ENCODE measurements at regions of chr10 and their contacts with region 1.

Region 1: GRCh38 chr10:44386546-44387052 is 1.7 kb upstream of the CXCL12 start:
- DNase-seq: peak; percentile 74 to 85
- H3K4me3 ChIP-seq: peak overlapping the region in 1 of 2 donors; percentile 15
- H3K27ac ChIP-seq: peak overlapping the region; percentile 79
- H3K4me1 ChIP-seq: peaks cover 38% of the 10 kb centered on the region
- H3K27me3 ChIP-seq: no peaks in the 10 kb centered on the region
- CTCF ChIP-seq: peak; percentile 57 to 90 (median 90)
- POLR2A ChIP-seq: no peak

Region 2: GRCh38 chr10:43671656-43672531 is 714.7 kb before region 1 on chr10:
- intact Hi-C with region 1: loop called (anchors 5 kb)
- DNase-seq: no peak
- H3K4me3 ChIP-seq: no peak overlapping the region
- H3K27ac ChIP-seq: peak overlapping the region; percentile 33
- H3K4me1 ChIP-seq: peaks cover 19% of the 10 kb centered on the region
- H3K27me3 ChIP-seq: no peaks in the 10 kb centered on the region
- CTCF ChIP-seq: peak; percentile 78 to 88 (median 87)
- POLR2A ChIP-seq: no peak

Region 3: GRCh38 chr10:43689955-43690771 is 696.4 kb before region 1 on chr10:
- intact Hi-C with region 1: loop called (anchors 2 kb)
- DNase-seq: no peak
- H3K4me3 ChIP-seq: peak overlapping the region; percentile 54 to 57
- H3K27ac ChIP-seq: peak overlapping the region; percentile 84
- H3K4me1 ChIP-seq: peaks cover 40% of the 10 kb centered on the region
- H3K27me3 ChIP-seq: no peaks in the 10 kb centered on the region
- CTCF ChIP-seq: peak; percentile 71 to 97 (median 77)
- POLR2A ChIP-seq: no peak

Region 4: GRCh38 chr10:44310762-44311562 is 75.6 kb before region 1 on chr10:
- intact Hi-C with region 1: loop called (anchors 5 kb)
- DNase-seq: peak; percentile 91 to 96
- H3K4me3 ChIP-seq: peak overlapping the region; percentile 21 to 39
- H3K27ac ChIP-seq: peak overlapping the region; percentile 82
- H3K4me1 ChIP-seq: peaks cover 31% of the 10 kb centered on the region
- H3K27me3 ChIP-seq: no peaks in the 10 kb centered on the region
- CTCF ChIP-seq: peak; percentile 70 to 91 (median 77)
- POLR2A ChIP-seq: no peak

Region 5: GRCh38 chr10:44864637-44865288 is 478.2 kb after region 1 on chr10:
- intact Hi-C with region 1: loop called (anchors 10 kb)
- DNase-seq: peak in 1 of 2 donors; percentile 91
- H3K4me3 ChIP-seq: peak overlapping the region; percentile 48 to 57
- H3K27ac ChIP-seq: peak overlapping the region; percentile 74
- H3K4me1 ChIP-seq: peaks cover 27% of the 10 kb centered on the region
- H3K27me3 ChIP-seq: no peaks in the 10 kb centered on the region
- CTCF ChIP-seq: peak; percentile 93 to 97 (median 95)
- POLR2A ChIP-seq: no peak